ENCODE measurements at regions of chr5 and their contacts with region 1.

Region 1: DNA sequence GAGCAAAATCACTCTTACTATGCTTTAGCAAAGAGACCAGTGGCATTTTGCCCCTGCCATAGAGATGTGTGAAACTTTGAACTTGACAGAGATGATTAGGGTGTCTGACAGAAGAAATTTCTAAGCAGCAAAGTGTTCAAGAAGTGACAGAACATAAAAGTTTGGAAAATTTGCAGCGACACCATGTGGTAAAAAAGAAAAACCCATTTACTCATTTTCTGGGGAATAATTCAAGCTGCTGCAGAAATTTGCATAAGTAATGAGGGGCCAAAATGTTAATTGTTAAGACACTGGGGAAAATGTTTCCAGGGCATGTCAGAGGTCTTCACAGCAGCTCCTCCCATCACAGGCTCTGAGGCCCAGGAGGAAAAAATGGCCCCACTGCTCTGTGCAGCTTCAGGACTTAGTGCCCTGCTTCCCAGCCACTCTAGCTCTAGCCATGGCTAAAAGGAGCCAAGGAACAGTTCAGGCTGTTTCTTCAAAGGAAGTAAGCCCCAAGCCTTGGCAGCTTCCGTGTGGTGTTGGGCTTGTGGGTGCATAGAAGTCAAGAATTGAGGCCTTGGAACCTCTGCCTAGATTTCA is 6.1 kb upstream of the AP3B1 start:
- DNase-seq: peak; percentile 23
- ATAC-seq: no peak
- H3K4me3 ChIP-seq: no peak overlapping the region
- H3K27ac ChIP-seq: no peak overlapping the region
- H3K4me1 ChIP-seq: peaks cover 3% of the 10 kb centered on the region
- H3K27me3 ChIP-seq: peaks cover 3% of the 10 kb centered on the region
- CTCF ChIP-seq: peak; percentile 45
- POLR2A ChIP-seq: no peak
- RAD21 ChIP-seq: peak; percentile 22; the same call in 1 of the 2 replicates

Region 2: DNA sequence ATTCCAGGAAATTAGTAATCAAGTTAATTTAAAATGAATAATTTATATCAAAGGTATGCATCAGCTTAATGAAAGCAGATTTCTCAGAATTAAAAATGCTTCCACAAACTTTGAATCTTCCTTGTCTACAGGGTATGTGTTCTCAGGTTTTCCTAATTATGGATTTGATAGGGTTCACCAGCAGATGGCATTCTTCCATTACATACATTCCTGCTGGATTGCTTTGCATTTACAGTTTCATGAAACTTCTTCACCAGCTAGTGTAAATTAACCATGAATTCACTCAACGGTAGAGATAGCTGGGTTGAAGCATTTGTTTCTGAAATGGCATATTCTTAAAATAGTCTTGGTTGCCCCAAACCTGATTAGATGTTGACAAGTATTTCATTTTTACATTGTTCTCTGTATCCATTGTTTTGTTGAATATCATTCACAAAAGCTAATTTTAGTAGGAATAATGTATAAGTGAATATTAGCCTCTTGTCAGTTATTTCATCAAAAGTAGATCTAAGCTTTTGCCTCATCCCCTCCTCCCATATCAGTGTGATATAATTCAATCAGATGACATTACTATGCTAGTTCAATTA is 739.8 kb before region 1 on chr5:
- CTCF ChIA-PET with region 1: interaction called, 5 read pairs
- POLR2A ChIA-PET with region 1: no interaction called
- dilution Hi-C with region 1: no loop called
- in situ Hi-C with region 1: no loop called
- intact Hi-C with region 1: loop called (anchors 2 kb)
- DNase-seq: peak; percentile 55
- ATAC-seq: peak; percentile 63
- H3K4me3 ChIP-seq: no peak overlapping the region
- H3K27ac ChIP-seq: no peak overlapping the region
- H3K4me1 ChIP-seq: no peaks in the 10 kb centered on the region
- H3K27me3 ChIP-seq: peaks cover 13% of the 10 kb centered on the region
- CTCF ChIP-seq: peak; percentile 65
- POLR2A ChIP-seq: no peak
- RAD21 ChIP-seq: peak; percentile 71

Region 3: GRCh38 chr5:77867194-77867691 is 433.3 kb before region 1 on chr5:
- CTCF ChIA-PET with region 1: no interaction called
- POLR2A ChIA-PET with region 1: no interaction called
- dilution Hi-C with region 1: no loop called
- in situ Hi-C with region 1: no loop called
- intact Hi-C with region 1: loop called (anchors 1 kb)
- DNase-seq: peak; percentile 32
- ATAC-seq: peak; percentile 82
- H3K4me3 ChIP-seq: no peak overlapping the region
- H3K27ac ChIP-seq: no peak overlapping the region
- H3K4me1 ChIP-seq: no peaks in the 10 kb centered on the region
- H3K27me3 ChIP-seq: peaks cover 19% of the 10 kb centered on the region
- CTCF ChIP-seq: peak; percentile 40
- POLR2A ChIP-seq: no peak
- RAD21 ChIP-seq: peak; percentile 27; the same call in 1 of the 2 replicates

Region 4: DNA sequence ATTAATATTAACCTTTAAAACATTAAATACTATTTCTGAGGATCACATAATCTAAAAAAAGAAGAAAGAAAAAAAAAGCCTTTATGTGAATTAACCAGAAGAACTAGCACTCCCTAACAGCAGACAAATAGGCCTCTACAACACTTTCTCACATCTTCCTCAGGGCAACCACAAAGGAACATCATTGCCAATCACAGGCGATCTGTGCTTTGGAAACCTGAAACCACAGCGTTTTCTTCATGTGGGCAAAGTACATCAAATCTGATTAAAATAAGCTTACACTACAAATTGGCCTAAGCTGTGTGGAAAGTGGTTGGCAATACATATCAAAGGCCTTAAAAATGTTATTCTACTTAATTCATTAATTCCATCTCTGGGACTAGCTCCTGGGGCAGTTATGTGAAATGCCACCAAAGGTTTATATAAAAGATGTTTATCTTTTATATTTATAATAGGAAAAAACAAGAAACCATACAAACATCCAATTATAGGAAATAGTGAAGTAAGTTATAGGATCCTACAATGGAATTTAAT is 339.6 kb before region 1 on chr5:
- CTCF ChIA-PET with region 1: no interaction called
- POLR2A ChIA-PET with region 1: no interaction called
- dilution Hi-C with region 1: no loop called
- in situ Hi-C with region 1: no loop called
- intact Hi-C with region 1: no loop called
- DNase-seq: no peak
- ATAC-seq: no peak
- H3K4me3 ChIP-seq: no peak overlapping the region
- H3K27ac ChIP-seq: no peak overlapping the region
- H3K4me1 ChIP-seq: no peaks in the 10 kb centered on the region
- H3K27me3 ChIP-seq: peaks cover 57% of the 10 kb centered on the region
- CTCF ChIP-seq: no peak
- POLR2A ChIP-seq: no peak
- RAD21 ChIP-seq: no peak

Region 5: DNA sequence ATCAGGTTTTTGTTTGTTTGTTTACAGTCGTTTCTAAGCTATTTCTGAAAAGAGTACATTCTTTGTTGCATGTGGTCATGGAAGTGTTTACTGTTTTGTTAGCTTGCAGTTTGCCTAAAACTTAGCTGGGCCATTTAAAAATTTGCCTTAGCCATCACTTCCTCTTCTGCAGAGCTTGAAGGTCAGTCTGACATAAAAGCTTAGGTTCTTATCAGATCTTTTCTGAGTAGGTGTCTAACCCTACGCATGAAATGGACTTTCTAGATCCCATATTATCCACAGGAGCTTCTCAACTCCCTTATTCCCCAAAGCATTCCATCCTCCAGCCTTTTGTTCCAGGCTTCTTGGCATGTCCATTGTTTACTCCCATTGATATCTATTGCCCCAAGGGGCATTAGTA is 96.3 kb before region 1 on chr5:
- CTCF ChIA-PET with region 1: no interaction called
- POLR2A ChIA-PET with region 1: no interaction called
- dilution Hi-C with region 1: no loop called
- in situ Hi-C with region 1: no loop called
- intact Hi-C with region 1: no loop called
- DNase-seq: no peak
- ATAC-seq: no peak
- H3K4me3 ChIP-seq: no peak overlapping the region
- H3K27ac ChIP-seq: no peak overlapping the region
- H3K4me1 ChIP-seq: no peaks in the 10 kb centered on the region
- H3K27me3 ChIP-seq: no peaks in the 10 kb centered on the region
- CTCF ChIP-seq: no peak
- POLR2A ChIP-seq: no peak
- RAD21 ChIP-seq: no peak

Region 6: GRCh38 chr5:78280261-78280660 is 20.3 kb before region 1 on chr5:
- CTCF ChIA-PET with region 1: no interaction called
- POLR2A ChIA-PET with region 1: no interaction called
- dilution Hi-C with region 1: no loop called
- in situ Hi-C with region 1: no loop called
- intact Hi-C with region 1: no loop called
- DNase-seq: no peak
- ATAC-seq: no peak
- H3K4me3 ChIP-seq: no peak overlapping the region
- H3K27ac ChIP-seq: no peak overlapping the region
- H3K4me1 ChIP-seq: no peaks in the 10 kb centered on the region
- H3K27me3 ChIP-seq: no peaks in the 10 kb centered on the region
- CTCF ChIP-seq: no peak
- POLR2A ChIP-seq: no peak
- RAD21 ChIP-seq: no peak

Region 7: GRCh38 chr5:79567921-79568549 is 1267.5 kb after region 1 on chr5:
- CTCF ChIA-PET with region 1: no interaction called
- POLR2A ChIA-PET with region 1: no interaction called
- dilution Hi-C with region 1: no loop called
- in situ Hi-C with region 1: no loop called
- intact Hi-C with region 1: no loop called
- DNase-seq: peak; percentile 57
- ATAC-seq: peak; percentile 79
- H3K4me3 ChIP-seq: no peak overlapping the region
- H3K27ac ChIP-seq: no peak overlapping the region
- H3K4me1 ChIP-seq: no peaks in the 10 kb centered on the region
- H3K27me3 ChIP-seq: no peaks in the 10 kb centered on the region
- CTCF ChIP-seq: no peak
- POLR2A ChIP-seq: no peak
- RAD21 ChIP-seq: no peak